Caco-2 (cell line): ENCODE measurements at regions of chr15 and their contacts with region 1.

Region 1: GRCh38 chr15:90648137-90649070 is 68.7 kb upstream of the BLM start:
- DNase-seq: peak; percentile 63 to 64
- H3K4me3 ChIP-seq: no peak overlapping the region
- H3K4me3 Mint-ChIP-seq: peak overlapping the region; percentile 52
- H3K27ac Mint-ChIP-seq: peak overlapping the region; percentile 86
- H3K4me1 ChIP-seq: peaks cover 13% of the 10 kb centered on the region
- H3K4me1 Mint-ChIP-seq: peaks cover 10% of the 10 kb centered on the region
- H3K27me3 ChIP-seq: no peaks in the 10 kb centered on the region
- H3K27me3 Mint-ChIP-seq: no peaks in the 10 kb centered on the region
- CTCF ChIP-seq: peak; percentile 86 to 90

Region 2: GRCh38 chr15:90691982-90692773 is 43.8 kb after region 1 on chr15:
- CTCF ChIA-PET with region 1: no interaction called
- POLR2A ChIA-PET with region 1: no interaction called
- intact Hi-C with region 1: loop called (anchors 1 kb)
- DNase-seq: no peak
- H3K4me3 ChIP-seq: no peak overlapping the region
- H3K4me3 Mint-ChIP-seq: no peak overlapping the region
- H3K27ac Mint-ChIP-seq: no peak overlapping the region
- H3K4me1 ChIP-seq: no peaks in the 10 kb centered on the region
- H3K4me1 Mint-ChIP-seq: no peaks in the 10 kb centered on the region
- H3K27me3 ChIP-seq: no peaks in the 10 kb centered on the region
- H3K27me3 Mint-ChIP-seq: no peaks in the 10 kb centered on the region
- CTCF ChIP-seq: no peak

Region 3: GRCh38 chr15:90819850-90820797 is 171.7 kb after region 1 on chr15:
- CTCF ChIA-PET with region 1: no interaction called
- POLR2A ChIA-PET with region 1: no interaction called
- intact Hi-C with region 1: loop called (anchors 5 kb)
- DNase-seq: no peak
- H3K4me3 ChIP-seq: no peak overlapping the region
- H3K4me3 Mint-ChIP-seq: no peak overlapping the region
- H3K27ac Mint-ChIP-seq: no peak overlapping the region
- H3K4me1 ChIP-seq: peaks cover 18% of the 10 kb centered on the region
- H3K4me1 Mint-ChIP-seq: peaks cover 7% of the 10 kb centered on the region
- H3K27me3 ChIP-seq: no peaks in the 10 kb centered on the region
- H3K27me3 Mint-ChIP-seq: no peaks in the 10 kb centered on the region
- CTCF ChIP-seq: no peak

Region 4: GRCh38 chr15:90869601-90870353 is 221.4 kb after region 1 on chr15:
- CTCF ChIA-PET with region 1: no interaction called
- POLR2A ChIA-PET with region 1: no interaction called
- intact Hi-C with region 1: loop called (anchors 5 kb)
- DNase-seq: peak; percentile 60 to 78
- H3K4me3 ChIP-seq: no peak overlapping the region
- H3K4me3 Mint-ChIP-seq: peak overlapping the region; percentile 71
- H3K27ac Mint-ChIP-seq: peak overlapping the region; percentile 64
- H3K4me1 ChIP-seq: peaks cover 66% of the 10 kb centered on the region
- H3K4me1 Mint-ChIP-seq: peaks cover 38% of the 10 kb centered on the region
- H3K27me3 ChIP-seq: no peaks in the 10 kb centered on the region
- H3K27me3 Mint-ChIP-seq: no peaks in the 10 kb centered on the region
- CTCF ChIP-seq: no peak

Region 5: GRCh38 chr15:90886041-90886614 is 237.7 kb after region 1 on chr15:
- CTCF ChIA-PET with region 1: interaction called, 22 read pairs
- POLR2A ChIA-PET with region 1: no interaction called
- intact Hi-C with region 1: loop called (anchors 1 kb)
- DNase-seq: peak; percentile 66 to 85
- H3K4me3 ChIP-seq: no peak overlapping the region
- H3K4me3 Mint-ChIP-seq: no peak overlapping the region
- H3K27ac Mint-ChIP-seq: no peak overlapping the region
- H3K4me1 ChIP-seq: no peaks in the 10 kb centered on the region; the same call in 1 of the 2 replicates
- H3K4me1 Mint-ChIP-seq: no peaks in the 10 kb centered on the region
- H3K27me3 ChIP-seq: no peaks in the 10 kb centered on the region
- H3K27me3 Mint-ChIP-seq: no peaks in the 10 kb centered on the region
- CTCF ChIP-seq: peak; percentile 94 to 97